ENCODE measurements at regions of chr7 and their contacts with region 1.

Region 1: DNA sequence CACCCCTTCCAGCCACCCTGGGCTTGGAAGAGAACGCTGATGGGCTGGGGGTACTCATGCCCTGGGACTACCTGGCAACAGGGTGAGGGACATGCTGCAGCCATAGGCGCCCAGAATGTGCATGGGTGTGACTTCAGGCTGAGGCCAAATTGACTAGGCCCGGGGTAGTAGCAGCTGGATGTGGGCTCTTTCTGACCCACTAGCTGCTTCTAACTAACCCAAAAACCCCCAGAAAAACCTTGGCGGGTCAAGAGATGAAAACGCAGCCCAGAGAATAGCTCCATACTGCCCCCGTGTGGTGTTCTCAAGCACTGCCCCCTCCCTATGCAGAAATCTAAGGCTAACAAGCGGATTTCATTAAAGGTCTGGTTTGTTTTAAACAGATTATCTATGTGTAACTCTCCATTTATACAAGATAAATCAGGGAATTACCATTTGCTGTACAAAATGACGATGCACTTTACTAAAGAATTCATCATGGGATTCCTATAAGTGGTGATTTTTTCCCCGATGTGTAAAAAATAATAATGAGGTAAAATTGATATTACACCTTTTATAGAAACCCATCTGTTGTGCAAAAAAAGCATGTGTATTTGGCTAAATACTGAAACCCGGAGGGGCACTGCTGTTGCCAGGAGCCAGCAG is 4.2 kb downstream of the SMARCD3 start:
- DNase-seq: peak; percentile 80

Region 2: GRCh38 chr7:151226875-151227782 is 17.2 kb before region 1 on chr7 and contains the start of gene ABCF2:
- CTCF ChIA-PET with region 1: interaction called, 31 read pairs
- POLR2A ChIA-PET with region 1: interaction called, 29 read pairs
- DNase-seq: peak; percentile 100

Region 3: DNA sequence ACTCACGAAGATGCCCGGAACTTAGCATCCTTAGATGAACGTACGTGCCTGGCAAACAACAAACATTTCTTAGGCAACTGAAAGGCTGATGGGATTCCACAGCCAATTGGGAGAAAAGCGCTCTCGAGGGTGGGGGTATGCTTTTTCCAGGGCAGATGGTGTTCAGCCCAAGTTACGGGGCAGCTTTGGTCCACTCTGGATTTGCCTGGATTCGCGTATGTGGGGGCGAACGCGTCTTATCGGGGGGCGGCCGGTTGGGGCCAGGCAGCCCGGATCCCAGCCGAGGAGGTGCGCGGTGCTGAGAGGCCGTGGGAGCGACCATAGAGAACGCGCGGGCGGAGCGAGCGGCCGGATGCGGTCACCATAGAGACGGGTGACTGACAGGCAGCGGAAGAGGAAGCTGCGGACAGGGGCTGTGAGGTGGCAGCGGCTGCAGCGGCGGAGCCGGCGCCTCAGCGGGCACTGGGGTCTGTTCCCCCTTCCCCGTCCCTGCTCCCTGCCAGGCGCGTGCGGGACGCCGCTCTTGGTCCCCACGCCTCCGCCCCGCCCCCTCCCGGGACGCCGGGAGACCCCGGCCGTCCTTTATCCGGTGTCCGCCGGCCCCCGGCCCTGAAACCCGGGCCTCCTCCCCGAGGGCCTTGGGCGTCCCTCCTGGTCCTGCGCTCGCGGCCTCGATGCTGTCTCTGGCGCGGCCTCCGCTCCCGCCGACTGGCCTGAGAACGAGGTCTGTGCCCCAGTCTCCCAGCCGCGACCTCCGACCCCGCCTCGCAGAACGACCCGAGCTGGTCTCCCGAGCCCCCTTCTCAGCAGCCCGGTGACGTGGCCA is 12.0 kb before region 1 on chr7 and contains the start of gene CHPF2:
- CTCF ChIA-PET with region 1: interaction called, 31 read pairs
- POLR2A ChIA-PET with region 1: interaction called, 29 read pairs
- DNase-seq: peak; percentile 97

Region 4: DNA sequence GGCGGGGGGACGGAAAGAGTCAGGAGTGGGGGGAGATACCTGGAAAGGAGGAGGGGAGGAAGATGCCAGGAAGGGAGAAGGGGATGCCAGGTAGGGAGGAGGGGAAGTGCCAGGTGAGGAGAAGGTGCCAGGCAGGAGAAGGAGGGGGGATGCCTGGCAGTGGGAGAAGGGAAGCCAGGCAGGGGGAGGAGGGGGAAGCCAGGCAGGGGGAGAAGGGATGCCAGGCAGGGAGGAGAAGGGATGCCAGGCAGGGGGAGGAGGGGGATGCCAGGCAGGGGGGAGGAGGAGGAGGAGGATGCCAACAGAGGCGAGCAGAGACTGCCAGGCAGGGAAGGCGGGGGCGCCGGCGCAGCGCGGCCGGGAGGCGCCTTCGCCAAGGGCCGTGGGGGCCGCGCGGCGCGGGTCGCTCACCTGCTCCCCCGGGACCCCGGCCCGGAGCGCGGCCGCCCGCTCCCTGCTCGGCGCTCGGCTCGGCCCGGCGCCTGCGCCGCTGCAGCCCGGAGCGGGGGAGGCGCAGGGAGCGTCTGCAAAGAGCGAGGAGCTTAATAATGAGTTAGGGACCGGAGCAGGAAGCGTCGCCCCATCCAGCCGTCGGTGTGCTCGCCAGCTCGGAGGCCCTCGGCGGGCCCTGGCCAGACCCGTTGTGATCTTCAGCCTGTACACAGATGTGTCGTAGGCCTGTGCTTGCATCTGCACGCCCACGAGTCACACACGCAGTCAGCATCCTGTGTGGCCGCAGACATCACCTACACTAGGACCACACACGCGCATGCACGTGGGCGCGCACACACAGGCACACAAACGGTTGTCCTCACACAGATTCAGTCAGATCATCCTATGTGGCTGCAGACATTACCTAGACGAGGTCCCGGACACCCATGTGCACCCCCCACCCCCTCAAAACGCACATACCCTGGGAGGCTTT is 32.6 kb after region 1 on chr7:
- CTCF ChIA-PET with region 1: interaction called, 7 read pairs
- POLR2A ChIA-PET with region 1: interaction called, 29 read pairs
- DNase-seq: peak; percentile 96

Region 5: GRCh38 chr7:151304856-151305255 is 60.5 kb after region 1 on chr7:
- CTCF ChIA-PET with region 1: interaction called, 18 read pairs
- POLR2A ChIA-PET with region 1: interaction called, 7 read pairs
- DNase-seq: no peak

Measured in HEK293T (cell line).